ENCODE measurements at regions of chr2 and their contacts with region 1.

Region 1: DNA sequence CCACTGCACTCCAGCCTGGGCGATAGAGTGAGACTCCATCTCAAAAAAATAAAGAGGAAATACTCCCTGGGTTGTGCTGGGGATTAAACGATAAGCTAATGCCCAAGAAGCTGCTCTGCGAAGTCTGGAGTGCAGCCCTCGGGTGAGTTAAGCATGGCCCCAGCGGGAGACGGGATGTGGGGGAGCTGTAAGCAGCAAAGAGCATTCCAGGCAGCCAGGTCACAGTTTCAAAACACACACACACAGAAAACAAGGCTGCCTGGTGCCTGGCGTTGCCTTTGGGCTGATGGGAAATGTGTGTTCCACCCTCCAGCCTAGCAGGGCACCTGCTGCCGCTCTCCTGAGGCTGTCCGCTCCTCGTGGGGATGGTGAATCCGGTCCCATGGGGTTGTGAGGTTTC is 24.1 kb downstream of the ODC1 start:
- DNase-seq: no peak
- H3K4me3 ChIP-seq: no peak overlapping the region
- CTCF ChIP-seq: no peak
- POLR2A ChIP-seq: no peak

Region 2: GRCh38 chr2:10124538-10125045 is 299.5 kb before region 1 on chr2:
- intact Hi-C with region 1: loop called (anchors 5 kb)
- DNase-seq: peak in 1 of 2 donors; percentile 45
- H3K4me3 ChIP-seq: no peak overlapping the region
- CTCF ChIP-seq: peak in 1 of 3 donors; percentile 20
- POLR2A ChIP-seq: no peak

Region 3: DNA sequence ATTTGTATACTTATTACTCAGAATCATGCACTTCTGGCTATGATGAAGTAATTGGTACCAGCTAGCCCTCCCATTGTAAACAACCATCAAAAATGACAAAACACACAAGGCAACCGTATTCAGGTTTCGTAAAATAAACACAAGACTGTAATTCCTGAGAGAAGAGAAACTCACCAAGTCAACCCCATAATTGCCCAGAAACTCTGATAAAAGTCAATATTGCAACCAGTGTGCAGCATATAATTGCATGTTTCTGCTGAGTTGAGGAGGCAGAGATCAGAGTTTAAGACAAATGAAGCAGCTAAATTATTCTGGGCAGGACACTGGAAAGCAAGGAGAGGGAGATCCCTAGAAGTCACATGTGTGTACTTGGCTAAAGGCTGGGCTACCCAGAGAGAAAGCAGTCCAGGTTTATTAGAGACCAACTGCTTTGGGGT is 830.1 kb after region 1 on chr2:
- intact Hi-C with region 1: loop called (anchors 10 kb)
- DNase-seq: no peak
- H3K4me3 ChIP-seq: no peak overlapping the region
- CTCF ChIP-seq: no peak
- POLR2A ChIP-seq: no peak

Measured in lower leg skin (tissue), 4 donors.